ENCODE measurements at regions of chr2 and their contacts with region 1.

Region 1: DNA sequence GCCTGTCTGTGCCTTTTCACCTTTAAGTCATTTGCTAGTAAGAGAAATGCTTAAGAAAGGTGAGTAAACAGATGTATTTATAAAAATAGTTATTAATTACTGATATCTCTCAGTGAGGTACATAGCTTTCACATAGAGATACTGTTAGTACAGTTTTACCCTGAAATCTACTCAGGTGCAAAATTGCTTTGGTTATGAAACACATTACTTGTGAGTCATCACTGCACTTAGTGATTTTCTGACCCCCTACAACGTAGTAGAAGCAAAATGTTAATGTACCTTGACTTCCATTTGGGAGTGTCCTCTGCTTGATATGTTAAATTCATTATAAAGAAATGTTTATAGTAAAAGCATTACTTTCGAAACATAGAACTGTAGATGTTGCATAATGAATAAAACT is 6.5 kb downstream of the GLS start:
- DNase-seq: peak; percentile 48
- ATAC-seq: peak; percentile 66
- H3K4me3 ChIP-seq: 0 out of 2 replicates have a peak overlapping the region, but pooled peaks have one; percentile 22
- H3K27ac ChIP-seq: peak overlapping the region; percentile 95; the same call in 1 of the 2 replicates
- H3K4me1 ChIP-seq: peaks cover 28% of the 10 kb centered on the region
- H3K27me3 ChIP-seq: no peaks in the 10 kb centered on the region
- CTCF ChIP-seq: no peak
- EP300 ChIP-seq: no peak
- POLR2A ChIP-seq: no peak
- RAD21 ChIP-seq: no peak

Region 2: DNA sequence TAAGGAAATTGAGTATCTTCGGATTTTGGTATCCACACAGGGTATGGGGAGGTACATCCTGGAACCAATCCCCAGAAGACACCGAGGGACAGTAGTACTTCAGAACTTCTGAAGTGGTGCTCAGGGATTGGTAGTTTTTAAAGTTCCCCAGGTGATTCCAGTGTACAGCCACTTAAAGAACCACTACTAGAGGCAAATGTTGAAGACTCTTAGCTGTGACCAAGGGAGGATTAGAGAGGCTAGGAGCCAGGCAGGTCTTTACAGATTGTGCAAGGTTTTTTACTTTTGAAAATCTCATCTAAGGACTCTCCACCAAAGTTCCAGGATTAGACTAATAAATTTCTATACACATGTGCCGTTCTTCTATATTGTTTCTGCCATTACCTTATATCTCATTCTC is 59.4 kb before region 1 on chr2:
- CTCF ChIA-PET with region 1: no interaction called
- POLR2A ChIA-PET with region 1: no interaction called
- RAD21 ChIA-PET with region 1: no interaction called
- SMC1A ChIA-PET with region 1: no interaction called
- in situ Hi-C with region 1: no loop called
- intact Hi-C with region 1: no loop called
- DNase-seq: no peak
- ATAC-seq: no peak
- H3K4me3 ChIP-seq: no peak overlapping the region
- H3K27ac ChIP-seq: no peak overlapping the region
- H3K4me1 ChIP-seq: no peaks in the 10 kb centered on the region
- H3K27me3 ChIP-seq: no peaks in the 10 kb centered on the region
- CTCF ChIP-seq: no peak
- EP300 ChIP-seq: no peak
- POLR2A ChIP-seq: no peak
- RAD21 ChIP-seq: no peak

Region 3: GRCh38 chr2:190911813-190912212 is 24.7 kb after region 1 on chr2:
- CTCF ChIA-PET with region 1: interaction called, 4 read pairs
- POLR2A ChIA-PET with region 1: interaction called, 3 read pairs
- RAD21 ChIA-PET with region 1: interaction called, 10 read pairs
- SMC1A ChIA-PET with region 1: interaction called, 13 read pairs
- in situ Hi-C with region 1: no loop called
- intact Hi-C with region 1: no loop called
- DNase-seq: peak; percentile 43
- ATAC-seq: peak; percentile 87
- H3K4me3 ChIP-seq: no peak overlapping the region
- H3K27ac ChIP-seq: peak overlapping the region; percentile 27; the same call in 1 of the 2 replicates
- H3K4me1 ChIP-seq: no peaks in the 10 kb centered on the region
- H3K27me3 ChIP-seq: no peaks in the 10 kb centered on the region
- CTCF ChIP-seq: no peak
- EP300 ChIP-seq: peak; percentile 33 to 42; a peak in 1 of 4 replicates
- POLR2A ChIP-seq: no peak
- RAD21 ChIP-seq: no peak

Region 4: GRCh38 chr2:190920085-190920484 is 33.0 kb after region 1 on chr2:
- CTCF ChIA-PET with region 1: interaction called, 5 read pairs
- POLR2A ChIA-PET with region 1: interaction called, 3 read pairs
- RAD21 ChIA-PET with region 1: interaction called, 3 read pairs
- SMC1A ChIA-PET with region 1: interaction called, 13 read pairs
- in situ Hi-C with region 1: no loop called
- intact Hi-C with region 1: no loop called
- DNase-seq: no peak
- ATAC-seq: no peak
- H3K4me3 ChIP-seq: no peak overlapping the region
- H3K27ac ChIP-seq: no peak overlapping the region
- H3K4me1 ChIP-seq: no peaks in the 10 kb centered on the region
- H3K27me3 ChIP-seq: no peaks in the 10 kb centered on the region
- CTCF ChIP-seq: no peak
- EP300 ChIP-seq: no peak
- POLR2A ChIP-seq: no peak
- RAD21 ChIP-seq: no peak

Region 5: DNA sequence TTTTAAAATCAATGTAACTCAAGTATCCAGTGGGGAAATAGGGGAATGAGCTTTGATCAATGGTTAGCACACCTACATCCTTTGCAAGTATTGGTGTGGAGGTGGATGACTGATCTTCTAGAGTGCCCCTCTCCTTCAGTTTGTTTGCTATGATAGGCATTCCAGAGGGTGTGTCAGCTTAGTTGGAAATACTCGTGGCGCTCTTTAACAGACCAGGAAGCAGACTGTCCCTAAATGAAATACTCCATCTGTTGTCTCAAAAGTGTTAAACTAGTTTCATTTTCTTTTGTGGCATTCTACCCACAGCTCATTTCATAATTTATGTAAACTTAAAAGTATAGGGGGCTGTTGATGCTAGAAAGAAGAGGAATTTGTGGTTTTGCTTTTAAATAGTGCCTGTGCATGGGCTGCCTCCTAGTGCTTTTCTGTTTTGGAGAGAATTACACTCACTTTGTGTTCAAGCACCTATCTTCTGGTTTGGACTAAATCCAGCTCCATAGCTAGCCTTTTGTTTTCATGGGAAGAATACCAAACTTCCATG is 60.7 kb after region 1 on chr2:
- CTCF ChIA-PET with region 1: interaction called, 9 read pairs
- POLR2A ChIA-PET with region 1: interaction called, 4 read pairs
- RAD21 ChIA-PET with region 1: interaction called, 10 read pairs
- SMC1A ChIA-PET with region 1: interaction called, 21 read pairs
- in situ Hi-C with region 1: no loop called
- intact Hi-C with region 1: no loop called
- DNase-seq: peak; percentile 45
- ATAC-seq: peak; percentile 69
- H3K4me3 ChIP-seq: no peak overlapping the region
- H3K27ac ChIP-seq: 0 out of 2 replicates have a peak overlapping the region, but pooled peaks have one; percentile 27
- H3K4me1 ChIP-seq: peaks cover 8% of the 10 kb centered on the region; the same call in 1 of the 2 replicates
- H3K27me3 ChIP-seq: no peaks in the 10 kb centered on the region
- CTCF ChIP-seq: peak; percentile 21 to 53 (median 34); a peak in 4 of 6 replicates
- EP300 ChIP-seq: no peak
- POLR2A ChIP-seq: no peak
- RAD21 ChIP-seq: peak; percentile 66

Region 6: GRCh38 chr2:190984595-190984994 is 97.5 kb after region 1 on chr2:
- CTCF ChIA-PET with region 1: no interaction called
- POLR2A ChIA-PET with region 1: no interaction called
- RAD21 ChIA-PET with region 1: no interaction called
- SMC1A ChIA-PET with region 1: no interaction called
- in situ Hi-C with region 1: no loop called
- intact Hi-C with region 1: no loop called
- DNase-seq: no peak
- ATAC-seq: peak; percentile 18; the same call in 2 of the 3 replicates
- H3K4me3 ChIP-seq: no peak overlapping the region
- H3K27ac ChIP-seq: no peak overlapping the region
- H3K4me1 ChIP-seq: no peaks in the 10 kb centered on the region
- H3K27me3 ChIP-seq: no peaks in the 10 kb centered on the region
- CTCF ChIP-seq: no peak
- EP300 ChIP-seq: no peak
- POLR2A ChIP-seq: peak; percentile 63
- RAD21 ChIP-seq: no peak

Region 7: DNA sequence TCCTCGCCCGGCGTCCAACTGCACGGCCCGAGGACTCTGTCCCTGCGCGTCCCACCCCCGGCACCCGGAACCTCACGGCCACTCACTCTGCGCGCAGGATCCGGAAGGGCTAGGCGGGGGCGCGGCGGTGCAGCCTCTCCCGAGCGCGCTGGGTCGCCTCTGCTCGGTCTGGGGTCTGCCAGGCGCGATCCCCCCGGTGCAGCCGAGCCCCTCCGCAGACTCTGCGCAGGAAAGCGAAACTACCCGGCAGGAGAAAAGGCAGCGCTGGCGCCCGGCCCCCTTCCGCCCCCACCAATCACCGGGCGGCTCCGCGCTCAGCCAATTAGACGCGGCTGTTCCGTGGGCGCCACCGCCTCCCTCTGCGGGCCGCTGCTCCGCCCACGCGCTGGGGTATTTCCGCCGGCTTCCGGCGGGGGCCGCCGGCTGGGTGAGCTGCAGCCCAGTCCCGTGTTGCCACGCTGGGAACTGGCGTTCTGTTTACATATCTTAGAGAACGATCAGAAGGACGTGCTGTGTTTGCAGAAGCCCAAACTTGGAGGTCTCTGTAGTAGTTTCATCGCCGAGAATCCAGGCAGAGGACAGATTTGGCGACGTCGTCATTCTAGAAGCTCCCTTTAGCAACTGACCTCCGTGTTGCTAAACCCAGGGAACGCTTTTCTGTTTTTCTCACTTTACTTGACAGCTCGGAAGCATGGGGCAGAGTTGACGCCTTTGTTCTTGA is 127.0 kb after region 1 on chr2 and contains the start of gene STAT1:
- CTCF ChIA-PET with region 1: interaction called, 3 read pairs
- POLR2A ChIA-PET with region 1: interaction called, 28 read pairs
- RAD21 ChIA-PET with region 1: interaction called, 18 read pairs
- SMC1A ChIA-PET with region 1: interaction called, 23 read pairs
- in situ Hi-C with region 1: no loop called
- intact Hi-C with region 1: loop called (anchors 5 kb)
- DNase-seq: peak; percentile 75
- ATAC-seq: peak; percentile 86
- H3K4me3 ChIP-seq: peak within 1 kb of the TSS; percentile 92
- H3K27ac ChIP-seq: peak within 1 kb of the TSS; percentile 97
- H3K4me1 ChIP-seq: peaks cover 27% of the 10 kb centered on the region
- H3K27me3 ChIP-seq: no peaks in the 10 kb centered on the region
- CTCF ChIP-seq: peak in 1 of 3 experiments; percentile 1; a peak in 1 of 6 replicates
- EP300 ChIP-seq: peak; percentile 75 to 100
- POLR2A ChIP-seq: peak; percentile 100
- RAD21 ChIP-seq: peak; percentile 8; the same call in 1 of the 2 replicates
- polyA plus RNA-seq, gene STAT1: 81.8 to 102 TPM

Region 8: GRCh38 chr2:191020221-191020741 is 133.2 kb after region 1 on chr2:
- CTCF ChIA-PET with region 1: no interaction called
- POLR2A ChIA-PET with region 1: interaction called, 28 read pairs
- RAD21 ChIA-PET with region 1: interaction called, 18 read pairs
- SMC1A ChIA-PET with region 1: interaction called, 12 read pairs
- in situ Hi-C with region 1: no loop called
- intact Hi-C with region 1: no loop called
- DNase-seq: peak; percentile 93
- ATAC-seq: peak; percentile 80
- H3K4me3 ChIP-seq: peak overlapping the region; percentile 69
- H3K27ac ChIP-seq: peak overlapping the region; percentile 100
- H3K4me1 ChIP-seq: peaks cover 48% of the 10 kb centered on the region
- H3K27me3 ChIP-seq: no peaks in the 10 kb centered on the region
- CTCF ChIP-seq: no peak
- EP300 ChIP-seq: peak; percentile 97 to 100
- POLR2A ChIP-seq: peak; percentile 97
- RAD21 ChIP-seq: no peak

Measured in GM12878 (cell line).